Natural killer cell (primary cell): ENCODE measurements at regions of chr19 and their contacts with region 1.

Region 1: GRCh38 chr19:8641908-8642547 is 11.6 kb downstream of the NFILZ start:
- DNase-seq: peak in 1 of 2 donors; percentile 75
- ATAC-seq: peak; percentile 78 to 93 (median 89)
- H3K4me3 ChIP-seq: no peak overlapping the region
- H3K4me3 Mint-ChIP-seq: no peak overlapping the region
- H3K27ac ChIP-seq: no peak overlapping the region
- H3K27ac Mint-ChIP-seq: no peak overlapping the region
- H3K4me1 ChIP-seq: peaks cover 9% of the 10 kb centered on the region
- H3K4me1 Mint-ChIP-seq: peaks cover 15 to 24% of the 10 kb centered on the region in 2 donors
- H3K27me3 ChIP-seq: no peaks in the 10 kb centered on the region
- H3K27me3 Mint-ChIP-seq: peaks cover 5 to 19% of the 10 kb centered on the region in 2 donors
- CTCF ChIP-seq: peak; percentile 79

Region 2: GRCh38 chr19:8005534-8006256 is 636.3 kb before region 1 on chr19 and contains the start of gene ELAVL1:
- intact Hi-C with region 1: no loop called
- DNase-seq: peak; percentile 92 to 95
- ATAC-seq: peak; percentile 91 to 97 (median 94)
- H3K4me3 ChIP-seq: peak within 1 kb of the TSS; percentile 95
- H3K4me3 Mint-ChIP-seq: peak within 1 kb of the TSS; percentile 85
- H3K27ac ChIP-seq: peak within 1 kb of the TSS; percentile 90
- H3K27ac Mint-ChIP-seq: peak within 1 kb of the TSS; percentile 74 to 78
- H3K4me1 ChIP-seq: peaks cover 39% of the 10 kb centered on the region
- H3K4me1 Mint-ChIP-seq: peaks cover 36% of the 10 kb centered on the region in 2 donors
- H3K27me3 ChIP-seq: no peaks in the 10 kb centered on the region
- H3K27me3 Mint-ChIP-seq: no peaks in the 10 kb centered on the region
- CTCF ChIP-seq: no peak
- total RNA-seq, gene ELAVL1: 36.9 to 43.9 (median 43.8) TPM

Region 3: DNA sequence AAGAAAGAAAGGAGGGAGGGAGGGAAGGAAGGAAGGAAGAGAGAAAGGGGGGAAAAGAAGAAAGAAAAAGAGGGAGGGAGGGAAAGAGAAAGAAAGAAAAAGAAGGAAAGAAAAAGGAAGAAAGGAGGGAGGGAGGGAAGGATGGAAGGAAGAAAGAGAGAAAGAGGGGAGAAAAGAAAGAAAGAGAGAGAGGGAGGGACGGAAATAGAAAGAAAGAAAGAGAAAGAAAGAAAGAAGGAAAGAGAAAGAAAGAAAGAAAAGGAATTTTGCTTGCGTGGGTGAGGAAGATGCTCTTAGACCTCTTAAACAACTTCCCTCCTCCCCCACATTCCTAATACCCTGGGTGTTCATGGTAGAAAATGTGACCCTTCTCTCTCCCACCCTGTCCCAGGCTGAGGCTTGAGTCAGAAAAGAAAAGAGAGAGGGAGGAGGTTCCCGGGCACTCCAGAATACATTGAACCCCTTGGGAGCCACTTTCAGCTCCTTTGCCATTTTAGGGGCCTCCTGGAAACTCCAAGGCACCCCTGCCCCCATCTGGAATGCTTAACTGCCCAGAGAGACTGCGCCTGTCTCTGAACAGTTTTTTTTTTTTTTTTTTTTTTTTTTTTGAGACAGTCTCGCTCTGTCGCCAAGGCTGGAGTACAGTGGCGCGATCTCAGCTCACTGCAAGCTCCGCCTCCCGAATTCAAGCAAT is 289.7 kb before region 1 on chr19:
- intact Hi-C with region 1: loop called (anchors 2 kb)
- DNase-seq: no peak
- ATAC-seq: no peak
- H3K4me3 ChIP-seq: no peak overlapping the region
- H3K4me3 Mint-ChIP-seq: no peak overlapping the region
- H3K27ac ChIP-seq: no peak overlapping the region
- H3K27ac Mint-ChIP-seq: no peak overlapping the region
- H3K4me1 ChIP-seq: peaks cover 9% of the 10 kb centered on the region
- H3K4me1 Mint-ChIP-seq: peaks cover 4 to 5% of the 10 kb centered on the region in 2 donors
- H3K27me3 ChIP-seq: peaks cover 6% of the 10 kb centered on the region
- H3K27me3 Mint-ChIP-seq: peaks cover 15 to 18% of the 10 kb centered on the region in 2 donors
- CTCF ChIP-seq: no peak

Region 4: GRCh38 chr19:8615813-8616596 is 26.0 kb before region 1 on chr19:
- intact Hi-C with region 1: loop called (anchors 1 kb)
- DNase-seq: peak; percentile 56 to 81
- ATAC-seq: peak; percentile 48 to 76 (median 58)
- H3K4me3 ChIP-seq: no peak overlapping the region
- H3K4me3 Mint-ChIP-seq: peak overlapping the region; percentile 11
- H3K27ac ChIP-seq: no peak overlapping the region
- H3K27ac Mint-ChIP-seq: peak overlapping the region; percentile 64 to 67
- H3K4me1 ChIP-seq: peaks cover 37% of the 10 kb centered on the region
- H3K4me1 Mint-ChIP-seq: peaks cover 27 to 38% of the 10 kb centered on the region in 2 donors
- H3K27me3 ChIP-seq: no peaks in the 10 kb centered on the region
- H3K27me3 Mint-ChIP-seq: peaks cover 0 to 12% of the 10 kb centered on the region in 2 donors
- CTCF ChIP-seq: peak; percentile 99

Region 5: DNA sequence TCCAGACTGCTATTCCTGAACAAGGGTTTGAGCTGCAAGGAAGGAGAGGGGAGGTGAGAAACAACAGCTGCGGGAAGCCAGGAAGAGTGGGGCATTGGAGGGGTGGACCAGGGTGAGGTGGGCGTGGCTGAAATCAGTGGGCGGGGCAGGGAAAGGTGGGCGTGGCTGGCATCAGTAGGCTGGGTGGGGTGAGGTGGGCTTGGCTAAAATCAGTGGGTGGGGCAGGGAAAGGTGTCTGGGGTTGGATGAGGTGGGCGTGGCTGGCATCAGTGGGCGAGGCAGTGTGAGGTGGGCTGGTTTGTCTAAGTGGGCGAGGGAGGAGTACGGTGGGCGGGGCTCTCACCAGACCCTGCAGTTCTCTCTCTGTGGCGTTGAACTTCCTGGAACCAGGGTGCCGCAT is 280.6 kb after region 1 on chr19:
- intact Hi-C with region 1: no loop called
- DNase-seq: no peak
- ATAC-seq: no peak
- H3K4me3 ChIP-seq: no peak overlapping the region
- H3K4me3 Mint-ChIP-seq: no peak overlapping the region
- H3K27ac ChIP-seq: no peak overlapping the region
- H3K27ac Mint-ChIP-seq: no peak overlapping the region
- H3K4me1 ChIP-seq: no peaks in the 10 kb centered on the region
- H3K4me1 Mint-ChIP-seq: no peaks in the 10 kb centered on the region
- H3K27me3 ChIP-seq: no peaks in the 10 kb centered on the region
- H3K27me3 Mint-ChIP-seq: no peaks in the 10 kb centered on the region
- CTCF ChIP-seq: no peak